HepG2 (cell line): ENCODE measurements at regions of chr18 and their contacts with region 1.

Region 1: GRCh38 chr18:79988451-79989194 is at the start of gene TXNL4A:
- DNase-seq: peak; percentile 69
- ATAC-seq: peak; percentile 95
- H3K4me3 ChIP-seq: peak within 1 kb of the TSS; percentile 84 to 96 (median 85)
- H3K27ac ChIP-seq: peak within 1 kb of the TSS; percentile 85
- H3K4me1 ChIP-seq: peaks cover 51% of the 10 kb centered on the region
- H3K27me3 ChIP-seq: no peaks in the 10 kb centered on the region; a peak in 1 of 5 replicates
- CTCF ChIP-seq: no peak
- EP300 ChIP-seq: no peak
- POLR2A ChIP-seq: peak; percentile 80 to 95
- RAD21 ChIP-seq: peak; percentile 33
- total RNA-seq, gene TXNL4A: 192 and 202 TPM in 2 replicates

Region 2: DNA sequence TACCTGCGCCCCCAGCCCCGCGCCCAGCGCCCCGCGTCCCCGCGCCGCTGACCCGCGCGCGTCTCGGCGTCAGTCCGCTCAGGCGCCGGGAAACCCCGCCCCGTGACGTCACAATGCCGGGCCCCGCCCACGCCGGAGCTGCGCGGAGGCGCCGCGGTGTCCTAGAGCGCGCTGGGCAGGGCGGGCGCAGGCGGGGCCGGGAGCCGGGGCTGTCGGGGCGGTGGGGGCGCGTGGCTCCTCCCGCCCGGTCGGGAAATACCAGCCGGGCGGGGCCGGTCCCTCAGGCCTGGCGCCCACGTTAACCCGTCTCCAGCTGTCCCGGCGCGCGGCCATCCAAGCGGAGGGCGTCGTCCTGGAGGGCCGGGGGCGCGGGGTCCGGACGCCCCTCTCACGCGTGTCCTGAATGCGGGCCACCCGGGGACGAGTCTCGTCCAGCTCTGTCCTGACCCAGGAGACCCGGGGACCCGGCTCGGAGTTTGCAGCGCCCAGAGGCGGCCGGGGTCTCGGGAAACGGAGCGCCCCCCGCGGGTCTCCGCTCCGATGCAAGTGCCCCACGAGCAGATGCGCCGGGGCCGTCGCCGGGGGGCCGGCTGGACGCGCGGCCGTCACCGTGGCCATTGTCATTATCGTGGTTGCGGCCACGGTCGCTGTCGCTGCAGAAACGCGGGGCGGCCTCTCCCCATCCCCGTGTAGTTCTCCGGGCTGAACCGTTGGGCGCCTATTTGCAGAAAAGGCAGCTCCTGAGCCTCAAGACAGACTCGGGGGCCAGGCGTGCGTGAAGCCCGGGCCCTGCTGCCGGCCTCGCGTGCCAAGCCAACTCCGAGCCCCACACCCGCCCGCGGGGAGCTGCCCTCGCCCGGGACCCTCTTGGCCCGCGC is 36.8 kb before region 1 on chr18 and contains the start of gene SLC66A2:
- CTCF ChIA-PET with region 1: no interaction called
- POLR2A ChIA-PET with region 1: interaction called, 6 read pairs
- in situ Hi-C with region 1: no loop called
- intact Hi-C with region 1: loop called (anchors 2 kb)
- DNase-seq: peak; percentile 57
- ATAC-seq: peak; percentile 86
- H3K4me3 ChIP-seq: peak within 1 kb of the TSS; percentile 85 to 89 (median 88)
- H3K27ac ChIP-seq: peak within 1 kb of the TSS; percentile 55
- H3K4me1 ChIP-seq: peaks cover 54% of the 10 kb centered on the region
- H3K27me3 ChIP-seq: no peaks in the 10 kb centered on the region; a peak in 1 of 5 replicates
- CTCF ChIP-seq: no peak
- EP300 ChIP-seq: no peak
- POLR2A ChIP-seq: no peak
- RAD21 ChIP-seq: 0 out of 2 replicates have a peak, but pooled peaks have one; percentile 9
- total RNA-seq, gene SLC66A2: 30.3 and 41.9 TPM in 2 replicates

Region 3: DNA sequence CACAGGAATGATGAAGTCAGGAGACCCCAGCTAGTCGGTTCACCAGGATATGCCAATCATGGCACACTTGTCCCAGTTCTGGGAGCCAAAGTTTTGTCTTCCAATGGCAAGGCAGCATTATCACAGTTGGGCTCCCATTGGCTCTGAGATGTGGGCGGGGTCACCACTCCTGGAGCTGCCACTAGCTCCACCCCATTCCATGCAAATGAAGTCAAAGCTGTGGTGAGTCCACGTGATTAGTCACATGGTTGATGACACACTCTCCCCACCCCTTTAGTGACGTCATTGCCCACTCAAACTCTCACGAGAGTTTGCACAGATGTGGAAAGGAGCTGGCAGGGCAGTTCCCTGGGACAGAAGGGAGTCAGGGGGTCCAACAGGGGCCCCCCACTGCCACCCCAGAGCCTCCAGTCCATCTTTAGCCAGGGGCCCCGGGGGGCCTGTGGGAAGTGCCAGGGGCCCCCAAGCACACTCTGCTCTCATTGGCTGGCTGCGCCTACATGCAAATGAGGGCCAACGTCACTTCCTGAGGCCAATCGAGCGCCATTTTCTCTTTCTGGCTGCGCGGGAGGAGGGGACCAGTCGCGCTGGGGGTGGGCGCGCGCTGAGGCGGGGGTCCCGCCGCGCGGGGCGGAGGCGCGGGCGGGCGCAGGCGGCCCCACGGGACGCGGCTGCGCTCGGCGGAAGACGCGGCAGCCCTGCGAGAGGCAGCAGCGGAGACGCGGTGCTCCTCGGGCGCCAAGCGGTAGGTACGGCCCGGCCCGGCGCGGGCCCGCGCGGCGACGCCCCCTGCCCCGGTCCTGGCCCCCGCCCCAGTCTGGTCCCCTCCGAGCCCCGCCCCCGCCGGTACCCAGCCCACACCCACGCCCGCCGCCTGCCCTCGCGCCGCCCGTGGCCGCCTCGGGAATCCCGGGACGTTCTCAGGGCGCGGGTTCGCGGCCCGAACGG is 120.4 kb after region 1 on chr18 and contains the start of gene ADNP2:
- CTCF ChIA-PET with region 1: no interaction called
- POLR2A ChIA-PET with region 1: interaction called, 9 read pairs
- in situ Hi-C with region 1: no loop called
- intact Hi-C with region 1: loop called (anchors 2 kb)
- DNase-seq: peak; percentile 96
- ATAC-seq: peak; percentile 74
- H3K4me3 ChIP-seq: peak within 1 kb of the TSS; percentile 79 to 96 (median 88)
- H3K27ac ChIP-seq: peak within 1 kb of the TSS; percentile 85
- H3K4me1 ChIP-seq: peaks cover 89% of the 10 kb centered on the region
- H3K27me3 ChIP-seq: no peaks in the 10 kb centered on the region
- CTCF ChIP-seq: no peak
- EP300 ChIP-seq: no peak
- POLR2A ChIP-seq: peak; percentile 57 to 63; a peak in 3 of 4 replicates
- RAD21 ChIP-seq: no peak
- total RNA-seq, gene ADNP2: 25.5 and 28.6 TPM in 2 replicates